MCF 10A (cell line): ENCODE measurements at regions of chr3 and their contacts with region 1.

Region 1: GRCh38 chr3:37210230-37210629 is 35.8 kb upstream of the LRRFIP2 start:
- DNase-seq: no peak
- H3K4me3 Mint-ChIP-seq: no peak overlapping the region
- H3K27ac Mint-ChIP-seq: no peak overlapping the region
- H3K4me1 Mint-ChIP-seq: no peaks in the 10 kb centered on the region
- H3K27me3 Mint-ChIP-seq: no peaks in the 10 kb centered on the region
- CTCF ChIP-seq: no peak

Region 2: GRCh38 chr3:36393563-36393962 is 816.7 kb before region 1 on chr3:
- CTCF ChIA-PET with region 1: no interaction called
- POLR2A ChIA-PET with region 1: no interaction called
- intact Hi-C with region 1: no loop called
- DNase-seq: no peak
- H3K4me3 Mint-ChIP-seq: no peak overlapping the region
- H3K27ac Mint-ChIP-seq: no peak overlapping the region
- H3K4me1 Mint-ChIP-seq: no peaks in the 10 kb centered on the region
- H3K27me3 Mint-ChIP-seq: peaks cover 10% of the 10 kb centered on the region
- CTCF ChIP-seq: no peak

Region 3: DNA sequence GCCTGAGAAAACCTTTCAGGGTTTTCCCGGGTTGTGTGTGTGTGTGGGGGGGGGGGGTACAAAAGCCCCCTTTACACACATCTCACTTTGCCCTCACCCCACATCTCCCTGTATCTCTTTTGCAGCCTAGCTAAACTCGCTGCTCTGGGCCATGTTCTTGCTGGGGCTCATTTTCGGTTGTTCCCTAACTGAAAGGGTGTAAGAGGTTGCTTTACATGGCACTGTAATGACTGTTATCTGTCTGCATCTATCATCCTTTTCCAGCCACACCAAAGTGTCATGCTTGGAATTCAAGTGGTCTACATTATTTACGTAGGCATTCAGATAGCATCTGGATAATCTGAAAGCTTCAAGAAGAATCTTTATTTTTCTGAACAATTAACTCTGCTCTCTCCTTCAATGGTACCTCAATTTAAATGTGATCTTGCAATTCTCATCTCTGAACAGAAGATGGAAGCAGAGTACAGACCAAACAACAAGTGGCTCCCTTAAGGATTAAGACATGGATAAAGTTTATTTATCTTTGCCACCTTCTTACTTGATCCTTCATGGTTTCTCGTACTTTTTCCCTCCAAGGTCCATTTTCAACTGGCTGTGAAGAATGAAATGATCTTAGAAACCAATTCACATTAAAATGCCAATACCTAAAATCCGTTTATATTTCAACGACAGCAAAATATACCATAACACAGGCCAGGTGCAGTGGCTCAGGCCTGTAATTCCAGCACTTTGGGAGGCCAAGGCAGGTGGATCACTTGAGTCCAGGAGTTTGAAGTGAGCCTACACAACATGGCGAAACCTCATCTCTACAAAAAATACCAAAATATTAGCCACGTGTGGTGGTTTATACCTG is 480.8 kb before region 1 on chr3:
- CTCF ChIA-PET with region 1: interaction called, 5 read pairs
- POLR2A ChIA-PET with region 1: no interaction called
- intact Hi-C with region 1: loop called (anchors 2 kb)
- DNase-seq: peak; percentile 64
- H3K4me3 Mint-ChIP-seq: no peak overlapping the region
- H3K27ac Mint-ChIP-seq: no peak overlapping the region
- H3K4me1 Mint-ChIP-seq: no peaks in the 10 kb centered on the region
- H3K27me3 Mint-ChIP-seq: peaks cover 21% of the 10 kb centered on the region
- CTCF ChIP-seq: peak; percentile 72

Region 4: GRCh38 chr3:36792342-36792741 is 417.9 kb before region 1 on chr3:
- CTCF ChIA-PET with region 1: no interaction called
- POLR2A ChIA-PET with region 1: no interaction called
- intact Hi-C with region 1: loop called (anchors 2 kb)
- DNase-seq: peak; percentile 51
- H3K4me3 Mint-ChIP-seq: no peak overlapping the region
- H3K27ac Mint-ChIP-seq: no peak overlapping the region
- H3K4me1 Mint-ChIP-seq: no peaks in the 10 kb centered on the region
- H3K27me3 Mint-ChIP-seq: peaks cover 26% of the 10 kb centered on the region
- CTCF ChIP-seq: peak; percentile 53

Region 5: DNA sequence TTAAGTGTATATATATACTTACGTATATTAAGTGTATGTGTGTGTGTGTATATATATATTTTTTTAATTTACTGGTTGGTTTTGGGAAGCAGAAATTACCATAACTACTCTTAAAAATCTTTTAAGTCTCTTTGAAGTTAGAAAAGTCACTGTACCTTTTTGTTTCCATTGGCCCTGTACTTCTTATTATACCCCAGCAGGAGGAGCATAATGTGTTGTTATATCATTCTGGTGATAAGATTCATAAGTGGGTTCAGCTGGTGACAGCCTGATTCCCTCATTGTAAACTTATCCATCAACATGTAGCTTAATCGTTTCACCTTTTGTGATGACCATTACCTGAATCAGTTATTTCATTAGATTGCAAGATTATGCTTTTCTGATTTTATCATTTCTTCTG is 186.1 kb before region 1 on chr3:
- CTCF ChIA-PET with region 1: interaction called, 11 read pairs
- POLR2A ChIA-PET with region 1: no interaction called
- intact Hi-C with region 1: loop called (anchors 1 kb)
- DNase-seq: peak; percentile 8
- H3K4me3 Mint-ChIP-seq: no peak overlapping the region
- H3K27ac Mint-ChIP-seq: no peak overlapping the region
- H3K4me1 Mint-ChIP-seq: no peaks in the 10 kb centered on the region
- H3K27me3 Mint-ChIP-seq: no peaks in the 10 kb centered on the region
- CTCF ChIP-seq: peak; percentile 19

Region 6: DNA sequence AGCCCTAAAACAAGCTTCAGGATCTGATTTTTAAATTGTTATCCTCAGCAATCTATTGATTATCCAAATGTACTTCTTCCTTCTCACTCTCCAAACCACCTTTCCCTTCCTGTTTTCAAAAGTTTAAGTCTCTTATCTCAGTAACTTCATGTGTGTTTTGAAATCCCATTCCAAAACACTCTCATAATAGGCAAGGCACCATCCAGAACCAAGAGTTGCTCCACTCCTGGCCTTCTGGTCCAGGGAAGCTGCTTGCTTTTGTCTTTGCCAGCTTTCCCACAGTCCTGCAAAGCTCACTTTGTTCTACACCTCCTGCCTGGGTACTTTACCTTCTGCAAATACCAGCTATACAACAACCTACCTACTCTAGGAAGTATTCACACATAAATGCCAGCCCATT is 153.4 kb before region 1 on chr3:
- CTCF ChIA-PET with region 1: interaction called, 5 read pairs
- POLR2A ChIA-PET with region 1: no interaction called
- intact Hi-C with region 1: loop called (anchors 5 kb)
- DNase-seq: no peak
- H3K4me3 Mint-ChIP-seq: no peak overlapping the region
- H3K27ac Mint-ChIP-seq: peak overlapping the region; percentile 5
- H3K4me1 Mint-ChIP-seq: no peaks in the 10 kb centered on the region
- H3K27me3 Mint-ChIP-seq: no peaks in the 10 kb centered on the region
- CTCF ChIP-seq: no peak

Region 7: GRCh38 chr3:37072892-37073291 is 137.3 kb before region 1 on chr3:
- CTCF ChIA-PET with region 1: interaction called, 3 read pairs
- POLR2A ChIA-PET with region 1: no interaction called
- intact Hi-C with region 1: loop called (anchors 5 kb)
- DNase-seq: peak; percentile 62
- H3K4me3 Mint-ChIP-seq: no peak overlapping the region
- H3K27ac Mint-ChIP-seq: no peak overlapping the region
- H3K4me1 Mint-ChIP-seq: peaks cover 26% of the 10 kb centered on the region
- H3K27me3 Mint-ChIP-seq: no peaks in the 10 kb centered on the region
- CTCF ChIP-seq: no peak

Region 8: DNA sequence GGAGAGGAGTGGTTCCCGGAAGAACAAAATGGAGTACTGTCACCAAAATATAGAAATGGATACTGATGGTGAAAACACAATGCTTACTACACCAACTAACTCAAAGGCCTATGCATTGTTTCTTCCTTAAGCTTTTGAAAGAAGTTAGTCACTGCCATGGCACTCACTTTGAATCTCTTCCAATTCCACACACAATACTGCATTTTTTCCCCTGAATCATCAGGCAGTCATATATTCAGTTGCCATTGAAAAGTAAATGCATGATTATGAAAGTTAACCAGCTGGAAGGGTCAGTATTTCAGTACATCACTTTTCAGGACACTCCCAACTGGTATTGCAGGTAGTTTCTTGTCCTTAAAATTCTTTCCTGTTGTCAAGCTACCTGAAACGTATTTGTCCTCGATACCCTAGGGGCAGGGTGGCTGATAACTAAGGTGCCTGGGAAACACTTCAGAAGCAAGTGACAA is 26.8 kb before region 1 on chr3:
- CTCF ChIA-PET with region 1: interaction called, 9 read pairs
- POLR2A ChIA-PET with region 1: interaction called, 11 read pairs
- intact Hi-C with region 1: no loop called
- DNase-seq: peak; percentile 94
- H3K4me3 Mint-ChIP-seq: peak overlapping the region; percentile 56
- H3K27ac Mint-ChIP-seq: peak overlapping the region; percentile 68
- H3K4me1 Mint-ChIP-seq: peaks cover 31% of the 10 kb centered on the region
- H3K27me3 Mint-ChIP-seq: no peaks in the 10 kb centered on the region
- CTCF ChIP-seq: no peak

Region 9: GRCh38 chr3:38029400-38030125 is 819.3 kb after region 1 on chr3 and contains the start of gene PLCD1:
- CTCF ChIA-PET with region 1: no interaction called
- POLR2A ChIA-PET with region 1: no interaction called
- intact Hi-C with region 1: no loop called
- DNase-seq: no peak
- H3K4me3 Mint-ChIP-seq: no peak within 1 kb of the TSS
- H3K27ac Mint-ChIP-seq: no peak within 1 kb of the TSS
- H3K4me1 Mint-ChIP-seq: peaks cover 34% of the 10 kb centered on the region
- H3K27me3 Mint-ChIP-seq: no peaks in the 10 kb centered on the region
- CTCF ChIP-seq: no peak
- total RNA-seq, gene PLCD1: 1.8 and 3.1 TPM in 2 replicates